Activated naive CD8-positive, alpha-beta T cell treated with anti-CD3 and anti-CD28 coated beads, Interleukin-2, amount 10 ng/mL, durations not matched to agents 7 days and 5 days (primary cell): ENCODE measurements at regions of chr14 and their contacts with region 1.

Region 1: GRCh38 chr14:89618811-89619551 is 201.9 kb upstream of the FOXN3 start:
- DNase-seq: peak; percentile 90
- ATAC-seq: peak; percentile 74
- H3K4me3 Mint-ChIP-seq: peak overlapping the region; percentile 99
- H3K27ac Mint-ChIP-seq: peak overlapping the region; percentile 99
- H3K4me1 Mint-ChIP-seq: peaks cover 59% of the 10 kb centered on the region
- H3K27me3 Mint-ChIP-seq: no peaks in the 10 kb centered on the region

Region 2: GRCh38 chr14:89430391-89431236 is 188.4 kb before region 1 on chr14:
- POLR2A ChIA-PET with region 1: interaction called, 33 read pairs
- DNase-seq: no peak
- ATAC-seq: peak; percentile 72
- H3K4me3 Mint-ChIP-seq: peak overlapping the region; percentile 84
- H3K27ac Mint-ChIP-seq: peak overlapping the region; percentile 96
- H3K4me1 Mint-ChIP-seq: peaks cover 54% of the 10 kb centered on the region
- H3K27me3 Mint-ChIP-seq: no peaks in the 10 kb centered on the region

Region 3: DNA sequence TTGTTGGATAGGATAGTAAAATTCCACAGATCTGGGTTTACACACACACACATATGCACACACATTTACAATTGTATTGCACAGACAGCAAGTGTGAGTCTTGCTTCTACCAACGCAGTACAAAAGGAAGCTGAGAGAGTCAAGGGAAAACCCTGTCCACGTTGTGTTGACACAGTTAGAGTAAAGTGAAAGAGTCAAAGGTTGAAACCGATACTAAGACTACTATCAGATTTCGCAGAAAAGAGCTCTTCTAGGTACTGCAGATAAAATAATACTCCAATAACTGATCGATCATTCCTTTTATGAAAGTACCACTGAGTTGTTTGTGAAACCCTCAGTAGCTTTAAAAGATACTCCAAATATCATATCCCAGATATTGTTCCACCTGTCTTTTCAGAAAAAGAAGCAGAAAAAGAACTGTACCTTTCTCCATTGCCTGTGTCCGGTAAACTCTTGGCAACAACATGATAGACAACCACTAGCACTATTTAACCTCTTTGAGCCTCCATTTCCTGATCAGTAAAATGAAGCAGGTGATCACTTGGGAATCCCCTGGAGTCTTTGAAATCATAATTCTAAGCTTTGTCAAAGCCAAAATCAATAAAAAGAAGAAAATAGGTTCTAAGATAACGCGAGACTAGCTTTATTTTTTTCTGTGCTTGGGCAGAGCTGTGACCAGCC is 22.7 kb after region 1 on chr14:
- POLR2A ChIA-PET with region 1: interaction called, 52 read pairs
- DNase-seq: no peak
- ATAC-seq: peak; percentile 95
- H3K4me3 Mint-ChIP-seq: peak overlapping the region; percentile 81
- H3K27ac Mint-ChIP-seq: peak overlapping the region; percentile 95
- H3K4me1 Mint-ChIP-seq: peaks cover 38% of the 10 kb centered on the region
- H3K27me3 Mint-ChIP-seq: no peaks in the 10 kb centered on the region

Region 4: GRCh38 chr14:89681086-89682018 is 62.4 kb after region 1 on chr14:
- POLR2A ChIA-PET with region 1: interaction called, 15 read pairs
- DNase-seq: peak; percentile 33
- ATAC-seq: peak; percentile 64
- H3K4me3 Mint-ChIP-seq: peak overlapping the region; percentile 68
- H3K27ac Mint-ChIP-seq: peak overlapping the region; percentile 89
- H3K4me1 Mint-ChIP-seq: peaks cover 32% of the 10 kb centered on the region
- H3K27me3 Mint-ChIP-seq: no peaks in the 10 kb centered on the region

Region 5: GRCh38 chr14:89954070-89955028 is 335.4 kb after region 1 on chr14 and contains the start of gene EFCAB11:
- POLR2A ChIA-PET with region 1: interaction called, 11 read pairs
- DNase-seq: peak; percentile 91
- ATAC-seq: peak; percentile 82
- H3K4me3 Mint-ChIP-seq: peak within 1 kb of the TSS; percentile 94
- H3K27ac Mint-ChIP-seq: peak within 1 kb of the TSS; percentile 87
- H3K4me1 Mint-ChIP-seq: peaks cover 28% of the 10 kb centered on the region
- H3K27me3 Mint-ChIP-seq: no peaks in the 10 kb centered on the region
- total RNA-seq, gene EFCAB11: 9.2 to 11.6 TPM